CD4-positive, alpha-beta memory T cell (primary cell): ENCODE measurements at regions of chr1 and their contacts with region 1.

Region 1: GRCh38 chr1:87292684-87293493 is 35.8 kb upstream of the LMO4 start:
- DNase-seq: peak; percentile 42 to 62 (median 52)
- H3K4me3 ChIP-seq: no peak overlapping the region
- H3K4me3 Mint-ChIP-seq: no peak overlapping the region
- H3K27ac ChIP-seq: no peak overlapping the region
- H3K27ac Mint-ChIP-seq: no peak overlapping the region
- H3K4me1 ChIP-seq: no peaks in the 10 kb centered on the region
- H3K4me1 Mint-ChIP-seq: no peaks in the 10 kb centered on the region
- H3K27me3 ChIP-seq: no peaks in the 10 kb centered on the region
- H3K27me3 Mint-ChIP-seq: peaks cover 0 to 10% of the 10 kb centered on the region in 2 donors

Region 2: DNA sequence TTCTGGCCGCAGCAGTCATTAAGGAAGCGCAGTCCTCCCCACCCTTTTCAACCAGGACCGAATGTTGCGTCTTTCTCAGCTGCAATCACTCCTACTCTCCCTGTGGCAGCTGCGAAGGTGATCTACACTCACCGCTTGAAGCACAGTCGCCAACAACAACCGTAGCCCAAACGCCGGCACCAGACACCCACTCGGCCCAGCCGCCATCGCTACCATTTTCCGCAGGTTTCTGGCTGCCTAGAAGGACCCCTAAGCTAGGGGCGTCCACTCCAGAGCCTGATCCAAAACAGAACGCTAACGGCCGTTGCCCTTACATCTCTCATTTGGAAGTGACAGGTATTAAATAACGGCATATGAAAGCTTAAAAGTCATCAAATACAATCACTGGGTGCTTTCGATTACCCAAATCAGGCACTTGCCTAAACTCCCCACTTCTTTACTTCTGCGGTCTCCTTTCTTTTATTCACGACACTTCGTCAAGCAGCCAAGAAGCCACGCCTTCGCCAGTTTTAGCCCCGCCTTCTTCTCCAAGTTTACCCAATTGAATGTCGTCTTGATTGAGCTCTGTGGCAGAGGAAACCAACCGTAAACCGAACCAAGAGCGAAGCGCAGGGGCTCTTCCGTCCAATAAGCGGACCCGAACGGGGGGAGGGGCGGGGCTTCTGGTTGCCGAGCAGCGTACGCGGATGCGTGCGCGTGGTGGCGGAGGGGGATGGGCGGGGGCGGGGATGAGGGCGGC is 378.8 kb before region 1 on chr1 and contains the start of gene SELENOF:
- CTCF ChIA-PET with region 1: no interaction called
- POLR2A ChIA-PET with region 1: no interaction called
- intact Hi-C with region 1: no loop called
- DNase-seq: peak; percentile 98 to 100 (median 99)
- H3K4me3 ChIP-seq: peak within 1 kb of the TSS; percentile 82 to 91
- H3K4me3 Mint-ChIP-seq: no peak within 1 kb of the TSS
- H3K27ac ChIP-seq: peak within 1 kb of the TSS; percentile 81
- H3K27ac Mint-ChIP-seq: peak within 1 kb of the TSS in 1 of 7 donors; percentile 31
- H3K4me1 ChIP-seq: peaks cover 47% of the 10 kb centered on the region
- H3K4me1 Mint-ChIP-seq: peaks cover 29 to 43% (median 41%) of the 10 kb centered on the region in 4 donors
- H3K27me3 ChIP-seq: no peaks in the 10 kb centered on the region
- H3K27me3 Mint-ChIP-seq: no peaks in the 10 kb centered on the region
- total RNA-seq, gene SELENOF: 151 to 169 TPM

Region 3: DNA sequence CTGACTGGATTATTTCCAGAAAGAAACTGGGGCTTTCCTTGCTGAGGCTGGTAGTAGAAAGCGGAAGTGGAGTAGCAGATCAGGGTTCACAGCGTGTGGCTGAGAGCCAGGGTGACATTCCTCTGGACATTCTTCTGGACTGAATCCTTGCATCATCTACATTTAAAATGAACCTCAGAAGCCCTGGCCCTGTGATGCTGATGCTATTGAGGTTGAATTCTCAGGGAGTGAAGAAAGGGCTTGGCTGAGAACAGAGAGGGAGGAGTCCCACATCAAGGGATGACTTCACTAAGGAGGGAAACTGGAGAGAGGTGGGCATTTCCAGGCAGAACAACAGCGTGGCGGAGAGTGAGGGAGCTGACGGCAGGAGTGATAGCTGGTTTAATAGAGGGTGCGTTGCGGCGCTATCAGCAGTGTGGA is 66.5 kb before region 1 on chr1:
- CTCF ChIA-PET with region 1: no interaction called
- POLR2A ChIA-PET with region 1: no interaction called
- intact Hi-C with region 1: no loop called
- DNase-seq: no peak
- H3K4me3 ChIP-seq: no peak overlapping the region
- H3K4me3 Mint-ChIP-seq: no peak overlapping the region
- H3K27ac ChIP-seq: no peak overlapping the region
- H3K27ac Mint-ChIP-seq: no peak overlapping the region
- H3K4me1 ChIP-seq: no peaks in the 10 kb centered on the region
- H3K4me1 Mint-ChIP-seq: no peaks in the 10 kb centered on the region
- H3K27me3 ChIP-seq: no peaks in the 10 kb centered on the region
- H3K27me3 Mint-ChIP-seq: peaks cover 4 to 8% of the 10 kb centered on the region in 2 donors

Region 4: DNA sequence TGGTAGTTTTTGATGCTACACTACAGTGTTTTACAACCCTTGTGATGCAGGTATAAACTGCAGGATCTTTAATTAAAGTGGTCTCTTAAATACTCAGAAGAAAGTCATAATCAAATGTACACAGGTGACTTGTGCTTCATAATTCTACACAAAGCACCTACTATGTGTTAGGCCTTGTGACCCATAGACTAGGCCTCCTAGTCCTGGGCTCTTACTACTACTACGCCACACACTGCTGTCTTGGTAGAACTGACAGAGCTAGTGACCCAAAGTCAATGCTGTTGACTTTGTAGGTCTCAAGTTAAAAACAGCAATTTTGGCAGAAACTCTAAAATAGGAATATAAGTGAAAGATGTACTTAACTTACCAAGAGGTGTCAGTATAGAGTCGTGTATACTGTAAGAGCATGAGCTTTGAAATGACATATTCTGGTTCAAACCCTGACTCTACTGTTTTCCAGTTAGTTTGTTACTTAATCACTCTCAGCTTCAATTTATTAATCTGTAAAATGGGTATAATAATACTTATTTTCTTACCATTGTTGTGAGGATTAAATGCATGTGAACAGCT is 12.8 kb before region 1 on chr1:
- CTCF ChIA-PET with region 1: interaction called, 12 read pairs
- POLR2A ChIA-PET with region 1: no interaction called
- intact Hi-C with region 1: no loop called
- DNase-seq: no peak
- H3K4me3 ChIP-seq: no peak overlapping the region
- H3K4me3 Mint-ChIP-seq: no peak overlapping the region
- H3K27ac ChIP-seq: no peak overlapping the region
- H3K27ac Mint-ChIP-seq: no peak overlapping the region
- H3K4me1 ChIP-seq: no peaks in the 10 kb centered on the region
- H3K4me1 Mint-ChIP-seq: no peaks in the 10 kb centered on the region
- H3K27me3 ChIP-seq: no peaks in the 10 kb centered on the region
- H3K27me3 Mint-ChIP-seq: peaks cover 4 to 18% of the 10 kb centered on the region in 2 donors

Region 5: GRCh38 chr1:87305762-87306161 is 12.9 kb after region 1 on chr1:
- CTCF ChIA-PET with region 1: interaction called, 10 read pairs
- POLR2A ChIA-PET with region 1: no interaction called
- intact Hi-C with region 1: no loop called
- DNase-seq: no peak
- H3K4me3 ChIP-seq: no peak overlapping the region
- H3K4me3 Mint-ChIP-seq: no peak overlapping the region
- H3K27ac ChIP-seq: no peak overlapping the region
- H3K27ac Mint-ChIP-seq: no peak overlapping the region
- H3K4me1 ChIP-seq: no peaks in the 10 kb centered on the region
- H3K4me1 Mint-ChIP-seq: no peaks in the 10 kb centered on the region
- H3K27me3 ChIP-seq: peaks cover 4% of the 10 kb centered on the region
- H3K27me3 Mint-ChIP-seq: peaks cover 6 to 10% of the 10 kb centered on the region in 2 donors

Region 6: DNA sequence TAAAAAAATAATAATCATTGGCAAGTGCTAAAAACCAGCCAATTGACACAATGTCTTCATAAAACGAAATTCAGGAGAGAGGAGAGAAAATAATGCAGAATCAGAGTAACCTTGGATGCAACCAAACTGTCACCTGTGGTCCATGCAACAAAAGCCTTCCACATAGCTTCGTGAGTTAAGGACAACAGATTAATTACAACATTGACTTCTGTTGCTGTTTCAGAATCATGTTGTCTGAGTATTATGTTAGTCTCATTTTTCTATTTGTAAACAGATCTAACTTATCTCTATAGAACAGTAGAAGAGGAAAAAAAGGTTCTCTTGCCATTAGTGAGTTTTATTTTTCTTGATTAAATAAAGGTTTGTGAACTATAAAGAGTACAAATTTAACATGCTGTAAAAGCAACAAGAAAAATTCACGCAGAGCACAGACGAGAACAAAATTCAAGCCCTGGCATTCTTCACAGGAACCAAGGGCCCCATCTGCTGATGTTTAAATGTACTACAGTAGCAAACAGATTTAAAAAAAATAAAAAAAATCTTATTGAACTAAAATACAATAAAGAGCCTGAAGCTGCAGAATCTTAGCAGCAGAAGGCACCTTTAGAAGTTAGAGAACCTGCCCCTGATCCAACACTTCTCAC is 1010.1 kb after region 1 on chr1:
- CTCF ChIA-PET with region 1: no interaction called
- POLR2A ChIA-PET with region 1: no interaction called
- intact Hi-C with region 1: loop called (anchors 2 kb)
- DNase-seq: no peak
- H3K4me3 ChIP-seq: no peak overlapping the region
- H3K4me3 Mint-ChIP-seq: no peak overlapping the region
- H3K27ac ChIP-seq: no peak overlapping the region
- H3K27ac Mint-ChIP-seq: no peak overlapping the region
- H3K4me1 ChIP-seq: no peaks in the 10 kb centered on the region
- H3K4me1 Mint-ChIP-seq: no peaks in the 10 kb centered on the region
- H3K27me3 ChIP-seq: no peaks in the 10 kb centered on the region
- H3K27me3 Mint-ChIP-seq: no peaks in the 10 kb centered on the region